ENCODE measurements at regions of chr19 and their contacts with region 1.

Region 1: DNA sequence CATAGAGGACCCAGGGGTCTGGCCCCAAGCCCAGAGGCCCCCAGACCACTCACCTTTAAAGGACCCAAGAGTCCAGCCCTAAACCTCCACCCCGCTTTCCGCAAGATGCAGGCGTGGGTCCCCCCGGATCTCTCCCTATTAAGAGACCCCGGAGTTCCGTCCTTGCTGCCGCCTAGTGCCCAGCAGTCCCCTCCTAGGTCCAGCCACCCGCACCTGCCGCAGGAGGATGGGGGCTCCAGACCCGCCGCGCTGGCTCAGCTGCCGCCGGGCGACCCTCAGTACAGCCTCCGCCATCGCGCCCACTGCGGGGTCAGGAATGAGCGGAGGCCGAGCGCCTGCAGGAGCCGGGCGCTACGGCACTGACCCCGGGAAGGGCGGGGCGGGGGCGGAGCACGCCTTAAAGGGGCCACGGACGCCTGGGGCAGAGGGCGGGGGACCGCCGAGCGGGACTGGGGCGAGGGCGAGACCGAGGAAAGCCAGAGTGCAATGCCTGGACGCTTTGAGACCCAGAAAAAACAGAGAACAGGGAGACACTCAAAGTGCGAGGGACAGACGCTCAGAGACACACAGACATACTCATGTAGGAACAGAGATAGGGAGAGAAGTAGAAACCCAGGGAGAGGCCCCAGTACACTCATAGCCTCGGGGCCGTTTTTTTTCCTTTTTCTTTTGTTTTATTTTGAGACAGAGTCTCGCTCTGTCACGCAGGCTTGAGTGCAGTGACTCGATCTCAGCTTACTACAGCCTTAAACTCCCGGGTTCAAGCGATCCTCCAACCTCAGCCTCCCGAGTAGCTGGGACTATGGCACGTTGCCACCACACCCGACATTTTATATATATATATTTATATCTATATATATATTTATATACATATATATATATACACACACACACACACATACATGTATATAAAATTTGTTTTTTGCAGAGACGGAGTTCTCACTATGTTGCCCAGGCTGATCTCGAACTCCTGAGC is at the start of gene ETHE1:
- DNase-seq: no peak
- ATAC-seq: peak; percentile 95
- H3K4me3 ChIP-seq: peak within 1 kb of the TSS; percentile 91
- H3K27ac ChIP-seq: peak within 1 kb of the TSS; percentile 65
- H3K4me1 ChIP-seq: peaks cover 3% of the 10 kb centered on the region; the same call in 1 of the 2 replicates
- H3K27me3 ChIP-seq: no peaks in the 10 kb centered on the region
- CTCF ChIP-seq: no peak
- EP300 ChIP-seq: no peak
- POLR2A ChIP-seq: peak; percentile 87
- RAD21 ChIP-seq: no peak
- polyA plus RNA-seq, gene ETHE1: 22.1 to 40.7 TPM

Region 2: GRCh38 chr19:43433358-43433673 is 93.9 kb before region 1 on chr19:
- CTCF ChIA-PET with region 1: interaction called, 11 read pairs
- POLR2A ChIA-PET with region 1: no interaction called
- RAD21 ChIA-PET with region 1: no interaction called
- SMC1A ChIA-PET with region 1: interaction called, 6 read pairs
- in situ Hi-C with region 1: no loop called
- intact Hi-C with region 1: no loop called
- DNase-seq: no peak
- ATAC-seq: no peak
- H3K4me3 ChIP-seq: no peak overlapping the region
- H3K27ac ChIP-seq: no peak overlapping the region
- H3K4me1 ChIP-seq: no peaks in the 10 kb centered on the region
- H3K27me3 ChIP-seq: no peaks in the 10 kb centered on the region
- CTCF ChIP-seq: no peak
- EP300 ChIP-seq: no peak
- POLR2A ChIP-seq: no peak
- RAD21 ChIP-seq: no peak

Region 3: GRCh38 chr19:43503501-43504425 is 23.4 kb before region 1 on chr19:
- CTCF ChIA-PET with region 1: interaction called, 42 read pairs
- POLR2A ChIA-PET with region 1: interaction called, 5 read pairs
- RAD21 ChIA-PET with region 1: interaction called, 6 read pairs
- SMC1A ChIA-PET with region 1: interaction called, 11 read pairs
- in situ Hi-C with region 1: no loop called
- intact Hi-C with region 1: no loop called
- DNase-seq: peak; percentile 78
- ATAC-seq: peak; percentile 96
- H3K4me3 ChIP-seq: peak overlapping the region; percentile 67
- H3K27ac ChIP-seq: peak overlapping the region; percentile 73
- H3K4me1 ChIP-seq: peaks cover 4% of the 10 kb centered on the region
- H3K27me3 ChIP-seq: no peaks in the 10 kb centered on the region
- CTCF ChIP-seq: peak in 2 of 3 experiments; percentile 30 to 46; a peak in 4 of 6 replicates
- EP300 ChIP-seq: no peak
- POLR2A ChIP-seq: peak; percentile 75
- RAD21 ChIP-seq: no peak

Region 4: DNA sequence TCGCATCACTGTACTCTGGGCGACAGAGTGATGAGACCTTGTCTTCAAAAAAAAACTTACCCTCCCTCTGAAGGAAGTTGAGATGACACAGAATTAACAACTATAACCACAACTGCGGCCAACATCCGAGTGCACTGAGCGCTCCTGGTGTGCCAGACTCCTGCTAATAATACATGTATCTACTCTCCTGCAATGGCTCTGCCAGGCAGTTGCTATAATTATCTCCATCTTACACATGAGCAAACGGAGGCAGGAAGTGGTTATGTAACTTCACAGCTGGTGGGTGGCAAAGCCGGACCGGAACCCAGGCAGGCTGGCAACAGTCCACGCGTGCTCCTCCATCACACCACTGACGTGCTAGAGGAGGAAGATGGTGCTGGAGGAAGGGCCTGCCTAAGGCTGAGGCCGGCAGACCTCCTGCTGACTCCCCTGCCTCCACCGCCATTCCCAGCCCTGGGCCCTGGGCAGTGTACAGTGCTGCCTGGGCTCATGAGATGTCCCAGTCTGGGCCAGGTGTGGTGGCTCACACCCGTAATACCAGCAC is 35.6 kb after region 1 on chr19:
- CTCF ChIA-PET with region 1: interaction called, 4 read pairs
- POLR2A ChIA-PET with region 1: interaction called, 10 read pairs
- RAD21 ChIA-PET with region 1: interaction called, 4 read pairs
- SMC1A ChIA-PET with region 1: interaction called, 4 read pairs
- in situ Hi-C with region 1: no loop called
- intact Hi-C with region 1: no loop called
- DNase-seq: peak; percentile 91
- ATAC-seq: peak; percentile 92
- H3K4me3 ChIP-seq: no peak overlapping the region
- H3K27ac ChIP-seq: peak overlapping the region; percentile 62
- H3K4me1 ChIP-seq: peaks cover 12% of the 10 kb centered on the region
- H3K27me3 ChIP-seq: no peaks in the 10 kb centered on the region
- CTCF ChIP-seq: no peak
- EP300 ChIP-seq: no peak
- POLR2A ChIP-seq: no peak; the same call in 1 of the 2 replicates
- RAD21 ChIP-seq: no peak